SK-N-SH (cell line): ENCODE measurements at regions of chr9 and their contacts with region 1.

Region 1: GRCh38 chr9:132901856-132902831 is 23.4 kb downstream of the SPACA9 start:
- DNase-seq: peak; percentile 84
- H3K4me3 ChIP-seq: no peak overlapping the region; a peak in 1 of 4 replicates
- H3K27ac ChIP-seq: peak overlapping the region in 1 of 2 experiments; percentile 26; a peak in 2 of 4 replicates
- H3K4me1 ChIP-seq: peaks cover 0 to 7% of the 10 kb centered on the region in 2 experiments; a peak in 1 of 4 replicates
- H3K27me3 ChIP-seq: no peaks in the 10 kb centered on the region
- CTCF ChIP-seq: peak; percentile 97
- EP300 ChIP-seq: no peak
- RAD21 ChIP-seq: peak; percentile 87

Region 2: GRCh38 chr9:132800038-132800648 is 102.0 kb before region 1 on chr9:
- CTCF ChIA-PET with region 1: interaction called, 50 read pairs
- POLR2A ChIA-PET with region 1: no interaction called
- DNase-seq: peak; percentile 85
- H3K4me3 ChIP-seq: peak overlapping the region in 1 of 2 experiments; percentile 28; a peak in 1 of 4 replicates
- H3K27ac ChIP-seq: peak overlapping the region in 1 of 2 experiments; percentile 66; a peak in 2 of 4 replicates
- H3K4me1 ChIP-seq: peaks cover 0 to 31% of the 10 kb centered on the region in 2 experiments; a peak in 2 of 4 replicates
- H3K27me3 ChIP-seq: no peaks in the 10 kb centered on the region; the same call in 1 of the 2 replicates
- CTCF ChIP-seq: peak; percentile 81
- EP300 ChIP-seq: peak in 1 of 2 experiments; percentile 70; a peak in 2 of 4 replicates
- RAD21 ChIP-seq: peak; percentile 97

Region 3: DNA sequence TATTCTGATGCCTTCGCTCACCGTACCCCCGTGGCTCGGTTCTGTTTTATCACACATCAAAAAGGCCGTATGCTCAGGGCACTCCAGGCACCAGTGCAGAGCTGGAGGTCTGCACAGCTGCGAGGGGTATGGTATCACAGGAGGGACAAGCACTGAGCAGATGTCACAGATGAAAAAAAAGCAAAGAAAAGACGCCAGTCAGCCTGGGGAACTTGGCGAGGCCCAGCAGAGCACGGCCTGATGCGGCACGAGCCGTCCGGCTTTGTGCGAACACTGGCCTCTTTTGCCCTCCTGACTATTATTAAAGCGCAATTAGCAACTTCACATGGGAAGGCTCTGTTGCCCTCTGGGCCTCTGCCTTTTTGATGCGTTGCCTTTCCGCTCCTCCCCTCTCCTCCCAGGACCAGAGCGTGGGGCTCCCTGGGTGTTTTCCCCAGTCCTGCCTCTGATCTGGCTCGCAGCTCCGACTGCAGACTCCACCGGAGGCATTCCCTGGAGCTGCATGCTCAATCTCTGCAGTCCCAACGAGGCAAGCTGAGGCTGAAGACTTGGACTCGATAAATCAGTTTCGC is 68.5 kb before region 1 on chr9:
- CTCF ChIA-PET with region 1: interaction called, 13 read pairs
- POLR2A ChIA-PET with region 1: no interaction called
- DNase-seq: peak; percentile 81
- H3K4me3 ChIP-seq: no peak overlapping the region
- H3K27ac ChIP-seq: peak overlapping the region in 1 of 2 experiments; percentile 72; a peak in 2 of 4 replicates
- H3K4me1 ChIP-seq: peaks cover 0 to 19% of the 10 kb centered on the region in 2 experiments; a peak in 1 of 4 replicates
- H3K27me3 ChIP-seq: no peaks in the 10 kb centered on the region
- CTCF ChIP-seq: no peak
- EP300 ChIP-seq: peak in 1 of 2 experiments; percentile 40; a peak in 2 of 4 replicates
- RAD21 ChIP-seq: no peak

Region 4: DNA sequence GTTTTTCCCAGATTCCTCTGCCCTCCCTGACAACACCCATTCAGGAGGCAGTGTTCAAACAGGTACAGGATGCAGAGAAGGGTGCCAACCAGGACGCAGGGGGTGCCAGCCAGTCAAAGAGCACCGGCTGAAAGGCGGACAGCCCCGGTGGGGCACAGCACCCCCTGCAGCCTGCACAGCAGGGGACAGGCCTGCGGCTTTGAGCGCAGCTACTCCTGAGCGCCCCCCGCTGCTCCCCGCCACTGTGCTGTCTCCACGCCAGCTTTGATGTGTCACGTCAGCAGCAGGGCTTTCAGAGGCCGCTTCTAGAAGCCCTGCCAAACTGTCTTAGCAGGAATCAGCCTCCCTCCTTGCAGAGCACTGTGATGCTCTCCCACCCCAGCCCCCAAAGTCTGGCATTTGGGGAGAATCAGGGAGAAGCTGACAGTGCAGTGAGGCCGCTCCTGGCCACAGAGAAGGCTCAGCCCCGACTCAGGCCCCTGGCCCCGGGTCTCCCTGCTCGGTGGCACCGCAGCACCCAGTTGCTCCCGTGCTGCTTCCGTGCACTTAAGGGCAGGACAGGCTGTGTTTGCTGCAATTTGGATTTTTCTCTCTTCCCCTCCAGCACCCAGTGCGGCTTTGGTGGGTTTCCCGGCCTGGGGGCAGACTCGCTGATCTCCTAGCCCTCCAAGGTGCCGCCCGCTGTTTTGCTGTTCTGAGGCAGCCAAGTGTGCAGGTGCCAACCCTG is 44.4 kb before region 1 on chr9:
- CTCF ChIA-PET with region 1: interaction called, 14 read pairs
- POLR2A ChIA-PET with region 1: no interaction called
- DNase-seq: peak; percentile 50
- H3K4me3 ChIP-seq: no peak overlapping the region
- H3K27ac ChIP-seq: no peak overlapping the region
- H3K4me1 ChIP-seq: peaks cover 0 to 22% of the 10 kb centered on the region in 2 experiments; a peak in 1 of 4 replicates
- H3K27me3 ChIP-seq: no peaks in the 10 kb centered on the region
- CTCF ChIP-seq: no peak
- EP300 ChIP-seq: no peak
- RAD21 ChIP-seq: no peak

Region 5: GRCh38 chr9:132885718-132886333 is 16.3 kb before region 1 on chr9:
- CTCF ChIA-PET with region 1: interaction called, 30 read pairs
- POLR2A ChIA-PET with region 1: no interaction called
- DNase-seq: no peak
- H3K4me3 ChIP-seq: no peak overlapping the region
- H3K27ac ChIP-seq: no peak overlapping the region
- H3K4me1 ChIP-seq: no peaks in the 10 kb centered on the region
- H3K27me3 ChIP-seq: no peaks in the 10 kb centered on the region
- CTCF ChIP-seq: no peak
- EP300 ChIP-seq: no peak
- RAD21 ChIP-seq: no peak

Region 6: GRCh38 chr9:132944302-132945185 is 42.4 kb after region 1 on chr9 and contains the start of gene TSC1:
- CTCF ChIA-PET with region 1: interaction called, 18 read pairs
- POLR2A ChIA-PET with region 1: no interaction called
- DNase-seq: peak; percentile 97
- H3K4me3 ChIP-seq: peak within 1 kb of the TSS; percentile 84 to 97
- H3K27ac ChIP-seq: peak within 1 kb of the TSS; percentile 96 to 98
- H3K4me1 ChIP-seq: peaks cover 15 to 27% of the 10 kb centered on the region in 2 experiments
- H3K27me3 ChIP-seq: no peaks in the 10 kb centered on the region
- CTCF ChIP-seq: no peak
- EP300 ChIP-seq: no peak
- RAD21 ChIP-seq: no peak
- polyA plus RNA-seq, gene TSC1: 18.3 and 27.6 TPM in 2 replicates